Activated naive CD8-positive, alpha-beta T cell treated with anti-CD3 and anti-CD28 coated beads, Interleukin-2, amount 10 ng/mL, durations not matched to agents 7 days and 5 days (primary cell): ENCODE measurements at regions of chr13 and their contacts with region 1.

Region 1: DNA sequence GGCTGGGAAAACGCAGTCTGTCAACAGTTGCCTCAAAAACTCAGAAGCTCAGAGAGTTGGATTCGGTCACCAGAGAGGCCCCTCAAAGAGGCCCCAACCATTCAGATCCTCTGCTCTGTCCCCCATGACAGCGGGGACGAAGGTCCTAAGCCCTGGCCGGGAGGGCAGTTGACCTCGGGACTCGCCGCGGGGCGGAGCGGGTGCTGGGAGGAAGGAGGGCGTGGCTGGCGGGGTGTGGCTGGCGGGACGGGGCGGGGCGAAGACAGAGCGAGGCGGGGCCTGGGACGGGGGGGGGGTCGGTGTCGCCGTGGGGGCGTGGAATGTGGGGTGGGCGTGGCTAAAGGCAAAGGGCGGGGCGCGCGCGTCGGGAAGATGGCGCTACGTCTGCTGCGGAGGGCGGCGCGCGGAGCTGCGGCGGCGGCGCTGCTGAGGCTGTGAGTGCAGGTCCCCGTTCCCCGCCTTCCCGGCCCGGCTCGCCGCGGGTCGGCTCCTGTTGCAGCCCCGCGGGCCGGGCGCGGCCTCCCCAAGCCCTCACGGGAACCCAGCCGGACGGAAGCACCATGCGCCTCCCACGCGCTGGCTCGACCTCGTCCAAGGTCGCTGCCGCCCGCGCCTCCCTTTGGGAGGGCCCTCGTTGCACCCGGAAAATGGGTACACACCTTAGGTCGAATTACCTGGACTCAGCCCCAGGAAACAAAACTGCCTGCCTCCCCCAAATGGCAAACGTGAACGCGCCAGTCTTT is 105.2 kb downstream of the TM9SF2 start:
- DNase-seq: peak; percentile 94
- ATAC-seq: peak; percentile 88
- H3K4me3 Mint-ChIP-seq: peak within 1 kb of the TSS; percentile 84
- H3K27ac Mint-ChIP-seq: peak within 1 kb of the TSS; percentile 89
- H3K4me1 Mint-ChIP-seq: peaks cover 24% of the 10 kb centered on the region
- H3K27me3 Mint-ChIP-seq: no peaks in the 10 kb centered on the region

Region 2: DNA sequence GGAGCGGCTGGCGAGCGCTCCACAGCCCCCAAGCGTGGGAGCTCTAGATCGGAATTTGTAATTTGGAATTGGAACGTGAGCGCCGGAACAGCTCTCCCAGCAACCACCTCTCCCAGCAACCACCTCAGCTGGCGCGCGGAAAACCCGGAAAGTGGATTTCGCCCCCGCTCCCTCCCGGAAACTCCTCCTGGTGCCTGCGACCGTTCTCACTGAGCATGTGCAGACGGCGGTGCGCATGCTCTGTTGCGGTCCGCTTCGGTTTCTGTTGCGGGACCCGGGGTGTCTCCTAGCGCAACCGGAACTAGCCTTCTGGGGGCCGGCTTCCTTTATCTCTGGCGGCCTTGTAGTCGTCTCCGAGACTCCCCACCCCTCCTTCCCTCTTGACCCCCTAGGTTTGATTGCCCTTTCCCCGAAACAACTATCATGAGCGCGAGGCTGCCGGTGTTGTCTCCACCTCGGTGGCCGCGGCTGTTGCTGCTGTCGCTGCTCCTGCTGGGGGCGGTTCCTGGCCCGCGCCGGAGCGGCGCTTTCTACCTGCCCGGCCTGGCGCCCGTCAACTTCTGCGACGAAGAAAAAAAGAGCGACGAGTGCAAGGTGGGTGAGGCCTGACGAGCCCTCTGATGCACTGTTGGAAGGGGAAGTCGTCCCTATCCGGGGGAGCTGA is 105.2 kb before region 1 on chr13 and contains the start of gene TM9SF2:
- POLR2A ChIA-PET with region 1: interaction called, 10 read pairs
- DNase-seq: peak; percentile 98
- ATAC-seq: peak; percentile 65
- H3K4me3 Mint-ChIP-seq: peak within 1 kb of the TSS; percentile 92
- H3K27ac Mint-ChIP-seq: peak within 1 kb of the TSS; percentile 96
- H3K4me1 Mint-ChIP-seq: peaks cover 55% of the 10 kb centered on the region
- H3K27me3 Mint-ChIP-seq: no peaks in the 10 kb centered on the region
- total RNA-seq, gene TM9SF2: 58.4 to 59.7 TPM

Region 3: GRCh38 chr13:99542788-99543406 is 63.6 kb before region 1 on chr13:
- POLR2A ChIA-PET with region 1: no interaction called
- DNase-seq: no peak
- ATAC-seq: peak; percentile 94
- H3K4me3 Mint-ChIP-seq: peak overlapping the region; percentile 49
- H3K27ac Mint-ChIP-seq: peak overlapping the region; percentile 82
- H3K4me1 Mint-ChIP-seq: peaks cover 27% of the 10 kb centered on the region
- H3K27me3 Mint-ChIP-seq: no peaks in the 10 kb centered on the region

Region 4: GRCh38 chr13:99590519-99591011 is 15.9 kb before region 1 on chr13:
- POLR2A ChIA-PET with region 1: no interaction called
- DNase-seq: no peak
- ATAC-seq: no peak
- H3K4me3 Mint-ChIP-seq: no peak overlapping the region
- H3K27ac Mint-ChIP-seq: no peak overlapping the region
- H3K4me1 Mint-ChIP-seq: no peaks in the 10 kb centered on the region
- H3K27me3 Mint-ChIP-seq: peaks cover 6% of the 10 kb centered on the region